B cell (primary cell): ENCODE measurements at regions of chr6 and their contacts with region 1.

Region 1: GRCh38 chr6:37698261-37699137 is 816 bp upstream of the MDGA1 start:
- DNase-seq: peak; percentile 83
- ATAC-seq: peak; percentile 37
- H3K4me3 ChIP-seq: peak overlapping the region; percentile 40 to 72 (median 60)
- H3K4me3 Mint-ChIP-seq: peak overlapping the region; percentile 88
- H3K27ac ChIP-seq: no peak overlapping the region
- H3K27ac Mint-ChIP-seq: peak overlapping the region; percentile 90
- H3K4me1 ChIP-seq: peaks cover 24 to 25% of the 10 kb centered on the region in 2 donors
- H3K4me1 Mint-ChIP-seq: peaks cover 26% of the 10 kb centered on the region
- H3K27me3 ChIP-seq: peaks cover 0 to 37% (median 18%) of the 10 kb centered on the region in 4 experiments
- H3K27me3 Mint-ChIP-seq: peaks cover 27% of the 10 kb centered on the region
- CTCF ChIP-seq: no peak

Region 2: DNA sequence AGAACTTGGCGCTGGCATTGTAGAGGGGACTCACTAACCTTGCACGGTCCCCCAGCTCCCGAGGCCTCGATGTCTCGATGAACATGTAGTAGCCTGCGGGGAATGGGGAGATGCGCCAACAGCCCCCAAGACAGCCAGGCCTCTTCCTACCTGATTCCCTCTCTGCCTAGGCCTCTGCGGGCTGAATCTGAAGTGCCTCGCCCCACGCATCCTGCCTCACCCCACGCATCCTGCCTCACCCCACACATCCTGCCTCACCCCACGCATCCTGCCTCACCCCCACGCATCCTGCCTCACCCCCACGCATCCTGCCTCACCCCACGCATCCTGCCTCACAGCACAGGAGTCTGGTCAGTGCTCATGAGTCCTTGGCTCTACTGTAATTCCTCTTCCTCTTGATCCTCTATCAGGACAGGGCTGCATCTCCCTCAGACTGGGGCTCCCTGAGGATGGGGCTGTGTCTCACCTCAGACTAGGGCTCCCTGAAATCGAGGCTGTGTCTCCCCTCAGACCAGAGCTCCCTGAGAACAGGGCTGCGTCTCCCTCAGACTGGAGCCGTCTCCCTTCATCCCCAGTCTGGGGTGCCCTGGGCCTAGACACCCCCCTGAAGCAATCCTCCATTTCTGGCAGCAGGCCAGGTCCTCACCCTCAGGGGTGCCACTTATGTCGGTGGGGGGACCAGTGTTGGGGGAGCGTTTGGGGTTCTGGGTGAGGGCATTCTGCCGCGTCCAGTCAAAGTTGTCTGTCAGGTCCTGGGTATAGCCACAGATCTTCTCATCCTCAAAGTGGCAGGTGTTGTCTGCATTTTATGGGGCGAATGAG is 54.4 kb before region 1 on chr6:
- CTCF ChIA-PET with region 1: no interaction called
- POLR2A ChIA-PET with region 1: no interaction called
- intact Hi-C with region 1: no loop called
- DNase-seq: no peak
- ATAC-seq: no peak
- H3K4me3 ChIP-seq: no peak overlapping the region
- H3K4me3 Mint-ChIP-seq: no peak overlapping the region
- H3K27ac ChIP-seq: no peak overlapping the region
- H3K27ac Mint-ChIP-seq: no peak overlapping the region
- H3K4me1 ChIP-seq: peaks cover 12 to 22% of the 10 kb centered on the region in 2 donors
- H3K4me1 Mint-ChIP-seq: peaks cover 10% of the 10 kb centered on the region
- H3K27me3 ChIP-seq: peaks cover 0 to 22% (median 10%) of the 10 kb centered on the region in 4 experiments
- H3K27me3 Mint-ChIP-seq: peaks cover 18% of the 10 kb centered on the region
- CTCF ChIP-seq: no peak

Region 3: DNA sequence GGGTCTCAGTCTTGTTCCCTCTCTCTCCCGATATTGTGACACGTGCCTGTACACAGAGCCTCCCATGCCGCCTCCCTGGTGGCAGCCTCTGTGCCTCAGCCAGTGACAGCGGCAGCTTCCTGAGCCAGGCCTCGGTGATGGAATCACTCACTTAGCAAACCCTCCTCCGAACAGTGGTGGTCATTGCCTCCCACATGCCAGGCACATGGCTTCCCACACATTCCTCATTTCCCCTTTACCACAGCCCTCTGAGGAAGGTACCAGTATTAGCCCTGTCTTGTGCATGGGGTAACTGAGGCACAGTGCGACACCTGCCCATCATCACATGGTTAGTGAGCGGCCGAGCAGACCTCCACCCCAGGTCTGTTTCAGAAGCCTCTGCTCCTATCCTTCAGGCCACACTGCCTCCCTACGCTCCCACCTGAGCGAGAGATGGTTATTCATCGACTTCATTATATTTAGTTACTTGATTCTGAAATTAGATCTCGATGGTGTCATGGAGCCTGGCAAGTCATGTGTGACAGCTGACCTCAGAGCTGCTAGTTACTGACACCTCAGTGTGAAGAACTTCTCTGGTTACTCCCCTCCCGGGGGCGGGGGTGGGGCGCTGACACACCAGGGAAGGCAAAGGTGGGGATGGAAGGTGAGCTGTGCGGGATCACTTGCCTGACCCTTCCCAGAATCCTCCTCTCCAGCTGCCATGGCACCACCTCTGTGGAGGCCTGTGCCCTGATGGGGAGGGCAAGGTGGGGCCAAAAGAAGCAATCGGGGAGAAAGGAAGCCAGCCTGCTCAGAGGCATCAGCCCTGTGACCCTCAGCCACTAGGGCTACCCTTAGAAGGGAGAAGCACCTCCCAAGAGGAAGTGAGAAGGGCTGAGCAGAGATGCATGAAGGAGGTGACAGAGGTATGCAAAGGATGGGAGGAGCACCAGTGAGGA is 18.7 kb before region 1 on chr6:
- CTCF ChIA-PET with region 1: interaction called, 3 read pairs
- POLR2A ChIA-PET with region 1: interaction called, 7 read pairs
- intact Hi-C with region 1: loop called (anchors 1 kb)
- DNase-seq: peak; percentile 84
- ATAC-seq: peak; percentile 87
- H3K4me3 ChIP-seq: peak overlapping the region in 3 of 5 experiments; percentile 5 to 34 (median 12)
- H3K4me3 Mint-ChIP-seq: peak overlapping the region; percentile 82
- H3K27ac ChIP-seq: peak overlapping the region; percentile 67 to 77
- H3K27ac Mint-ChIP-seq: peak overlapping the region; percentile 94
- H3K4me1 ChIP-seq: peaks cover 24 to 42% of the 10 kb centered on the region in 2 donors
- H3K4me1 Mint-ChIP-seq: peaks cover 48% of the 10 kb centered on the region
- H3K27me3 ChIP-seq: no peaks in the 10 kb centered on the region
- H3K27me3 Mint-ChIP-seq: no peaks in the 10 kb centered on the region
- CTCF ChIP-seq: no peak

Region 4: DNA sequence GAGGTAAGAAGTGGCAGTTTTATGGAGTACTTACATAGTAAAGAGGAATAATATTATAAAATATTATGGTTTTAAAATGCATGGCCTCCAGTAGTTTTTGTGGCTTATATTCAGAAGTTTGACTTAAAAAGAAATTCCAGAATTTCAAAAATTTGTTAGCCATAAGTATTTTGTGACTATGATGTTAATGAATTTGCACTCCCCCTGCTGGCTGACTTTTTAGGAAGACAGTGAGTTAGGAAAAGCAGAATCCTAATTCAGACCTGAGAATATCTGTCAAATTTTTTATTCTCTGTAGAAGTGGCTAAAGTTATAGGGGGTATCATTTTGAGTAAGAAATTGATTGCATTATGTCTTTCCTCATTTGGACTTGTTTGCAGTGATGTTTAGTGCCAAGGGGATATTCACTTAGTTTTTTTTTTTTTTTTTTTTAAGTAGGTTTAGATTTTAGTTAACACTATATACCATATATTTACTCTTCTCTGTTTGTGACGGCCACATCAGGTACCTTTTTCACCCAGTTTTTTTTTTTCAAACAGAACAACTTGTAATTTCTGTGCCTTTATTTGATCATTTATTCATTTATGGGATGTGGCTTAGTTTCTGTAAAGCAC is 161.8 kb after region 1 on chr6:
- CTCF ChIA-PET with region 1: no interaction called
- POLR2A ChIA-PET with region 1: no interaction called
- intact Hi-C with region 1: loop called (anchors 2 kb)
- DNase-seq: peak; percentile 54
- ATAC-seq: no peak
- H3K4me3 ChIP-seq: no peak overlapping the region
- H3K4me3 Mint-ChIP-seq: no peak overlapping the region
- H3K27ac ChIP-seq: no peak overlapping the region
- H3K27ac Mint-ChIP-seq: no peak overlapping the region
- H3K4me1 ChIP-seq: peaks cover 0 to 7% of the 10 kb centered on the region in 2 donors
- H3K4me1 Mint-ChIP-seq: peaks cover 51% of the 10 kb centered on the region
- H3K27me3 ChIP-seq: no peaks in the 10 kb centered on the region
- H3K27me3 Mint-ChIP-seq: no peaks in the 10 kb centered on the region
- CTCF ChIP-seq: peak; percentile 62